Gastrocnemius medialis (tissue), 4 donors: ENCODE measurements at regions of chr10 and their contacts with region 1.

Region 1: DNA sequence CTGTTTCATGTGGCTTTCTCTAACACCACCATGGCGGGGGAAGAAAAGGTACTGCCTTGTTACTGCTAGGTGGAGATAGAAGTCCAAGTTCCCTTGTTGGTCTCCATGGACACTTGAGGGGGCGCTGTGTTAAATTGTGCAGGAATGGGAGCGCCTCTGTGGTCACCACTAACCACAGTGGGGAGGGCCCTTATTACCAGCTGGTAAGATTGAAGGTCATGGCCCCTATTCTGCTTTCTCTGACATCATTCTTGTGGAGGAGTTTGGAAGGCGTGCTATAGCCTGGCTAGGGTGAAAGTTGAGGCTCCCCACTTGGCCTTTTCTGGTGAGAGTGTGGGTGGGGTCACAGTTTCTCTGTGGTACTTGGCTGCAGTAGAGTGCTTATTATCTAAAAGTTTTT is 14.9 kb upstream of the MXI1 start:
- DNase-seq: no peak
- ATAC-seq: no peak
- H3K4me3 ChIP-seq: no peak overlapping the region
- H3K27ac ChIP-seq: no peak overlapping the region
- H3K4me1 ChIP-seq: no peaks in the 10 kb centered on the region
- H3K27me3 ChIP-seq: no peaks in the 10 kb centered on the region
- CTCF ChIP-seq: no peak
- POLR2A ChIP-seq: no peak

Region 2: DNA sequence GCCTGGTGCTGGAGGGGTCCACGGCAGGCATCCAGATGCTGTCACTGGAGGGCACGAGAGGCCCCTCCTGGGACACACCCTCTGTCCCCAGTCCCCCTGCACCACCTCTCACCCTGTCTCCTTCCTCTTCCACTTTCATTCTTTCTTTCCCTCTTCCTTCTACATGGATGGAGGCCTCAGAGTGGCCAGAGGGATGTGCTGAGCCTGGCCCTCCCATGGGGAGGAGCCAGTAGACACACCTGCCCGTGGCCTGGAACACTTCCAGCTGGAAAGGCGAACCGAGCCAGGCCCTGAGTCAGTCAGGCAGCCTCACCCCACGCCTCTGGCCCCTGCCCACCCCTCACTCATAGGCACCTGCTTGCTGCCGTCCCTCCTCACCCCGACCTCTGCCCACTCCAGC is 41.1 kb before region 1 on chr10:
- in situ Hi-C with region 1: loop called in 1 of 4 experiments (anchors 10 kb)
- intact Hi-C with region 1: loop called (anchors 5 kb)
- DNase-seq: no peak
- ATAC-seq: no peak
- H3K4me3 ChIP-seq: no peak overlapping the region
- H3K27ac ChIP-seq: no peak overlapping the region
- H3K4me1 ChIP-seq: no peaks in the 10 kb centered on the region
- H3K27me3 ChIP-seq: peaks cover 0 to 6% (median 0%) of the 10 kb centered on the region in 3 donors
- CTCF ChIP-seq: no peak
- POLR2A ChIP-seq: no peak

Region 3: DNA sequence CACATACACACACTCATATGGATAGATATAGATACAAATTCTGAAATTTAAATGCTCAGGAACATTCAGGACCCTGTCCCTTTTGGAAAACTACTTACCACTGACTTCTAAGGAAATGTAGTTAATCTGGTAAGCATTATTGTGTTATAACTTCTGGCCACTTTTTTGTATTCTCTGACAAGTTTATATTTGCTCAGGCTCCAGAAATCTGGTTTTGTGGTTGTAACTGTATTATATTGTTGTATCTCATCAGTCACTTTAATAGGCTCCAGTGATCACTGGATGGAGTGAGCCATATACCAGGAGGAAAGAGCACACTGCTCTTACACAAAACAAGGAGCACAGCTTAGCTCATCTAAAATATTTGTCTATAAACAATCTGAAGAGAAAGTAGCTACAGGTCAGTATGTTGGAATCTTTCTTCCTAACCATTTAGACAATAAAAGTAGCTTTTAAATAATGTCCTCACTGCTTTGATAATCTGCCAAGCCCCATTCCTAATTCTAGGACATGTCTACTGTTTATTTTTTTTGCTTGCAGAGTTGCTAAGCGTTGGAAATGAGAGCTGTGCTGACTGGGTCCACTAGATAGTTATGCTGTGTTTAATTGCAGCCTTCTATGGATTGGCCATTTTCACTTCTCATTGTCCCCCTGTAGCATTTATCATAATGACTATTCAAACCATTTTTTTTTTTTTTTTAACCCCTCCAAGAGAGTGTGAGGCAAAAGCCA is 68.4 kb after region 1 on chr10:
- in situ Hi-C with region 1: no loop called
- intact Hi-C with region 1: no loop called
- DNase-seq: no peak
- ATAC-seq: peak in 1 of 2 donors; percentile 33
- H3K4me3 ChIP-seq: no peak overlapping the region
- H3K27ac ChIP-seq: peak overlapping the region; percentile 15 to 45 (median 37)
- H3K4me1 ChIP-seq: peaks cover 23 to 42% of the 10 kb centered on the region in 2 donors
- H3K27me3 ChIP-seq: no peaks in the 10 kb centered on the region
- CTCF ChIP-seq: no peak
- POLR2A ChIP-seq: no peak

Region 4: GRCh38 chr10:110304780-110305421 is 112.3 kb after region 1 on chr10 and contains the start of gene SMNDC1:
- in situ Hi-C with region 1: no loop called
- intact Hi-C with region 1: no loop called
- DNase-seq: peak; percentile 94 to 97
- ATAC-seq: peak; percentile 93 to 96
- H3K4me3 ChIP-seq: peak within 1 kb of the TSS; percentile 74 to 88 (median 86)
- H3K27ac ChIP-seq: peak within 1 kb of the TSS; percentile 91 to 95 (median 94)
- H3K4me1 ChIP-seq: peaks cover 42 to 45% of the 10 kb centered on the region in 2 donors
- H3K27me3 ChIP-seq: no peaks in the 10 kb centered on the region
- CTCF ChIP-seq: no peak
- POLR2A ChIP-seq: peak; percentile 68 to 69
- total RNA-seq, gene SMNDC1: 7.3 to 23.9 (median 10.0) TPM